GM10248 (cell line): ENCODE measurements at regions of chr19 and their contacts with region 1.

Region 1: GRCh38 chr19:11535792-11536595 is 2.7 kb upstream of the CNN1 start:
- DNase-seq: peak; percentile 96
- CTCF ChIP-seq: peak; percentile 78

Region 2: GRCh38 chr19:11489378-11489777 is 46.6 kb before region 1 on chr19:
- CTCF ChIA-PET with region 1: no interaction called
- POLR2A ChIA-PET with region 1: no interaction called
- DNase-seq: no peak
- CTCF ChIP-seq: no peak

Region 3: GRCh38 chr19:11551603-11552235 is 15.7 kb after region 1 on chr19:
- CTCF ChIA-PET with region 1: interaction called, 14 read pairs
- POLR2A ChIA-PET with region 1: no interaction called
- DNase-seq: peak; percentile 29
- CTCF ChIP-seq: peak; percentile 33